PC-9 (cell line): ENCODE measurements at regions of chr6 and their contacts with region 1.

Region 1: DNA sequence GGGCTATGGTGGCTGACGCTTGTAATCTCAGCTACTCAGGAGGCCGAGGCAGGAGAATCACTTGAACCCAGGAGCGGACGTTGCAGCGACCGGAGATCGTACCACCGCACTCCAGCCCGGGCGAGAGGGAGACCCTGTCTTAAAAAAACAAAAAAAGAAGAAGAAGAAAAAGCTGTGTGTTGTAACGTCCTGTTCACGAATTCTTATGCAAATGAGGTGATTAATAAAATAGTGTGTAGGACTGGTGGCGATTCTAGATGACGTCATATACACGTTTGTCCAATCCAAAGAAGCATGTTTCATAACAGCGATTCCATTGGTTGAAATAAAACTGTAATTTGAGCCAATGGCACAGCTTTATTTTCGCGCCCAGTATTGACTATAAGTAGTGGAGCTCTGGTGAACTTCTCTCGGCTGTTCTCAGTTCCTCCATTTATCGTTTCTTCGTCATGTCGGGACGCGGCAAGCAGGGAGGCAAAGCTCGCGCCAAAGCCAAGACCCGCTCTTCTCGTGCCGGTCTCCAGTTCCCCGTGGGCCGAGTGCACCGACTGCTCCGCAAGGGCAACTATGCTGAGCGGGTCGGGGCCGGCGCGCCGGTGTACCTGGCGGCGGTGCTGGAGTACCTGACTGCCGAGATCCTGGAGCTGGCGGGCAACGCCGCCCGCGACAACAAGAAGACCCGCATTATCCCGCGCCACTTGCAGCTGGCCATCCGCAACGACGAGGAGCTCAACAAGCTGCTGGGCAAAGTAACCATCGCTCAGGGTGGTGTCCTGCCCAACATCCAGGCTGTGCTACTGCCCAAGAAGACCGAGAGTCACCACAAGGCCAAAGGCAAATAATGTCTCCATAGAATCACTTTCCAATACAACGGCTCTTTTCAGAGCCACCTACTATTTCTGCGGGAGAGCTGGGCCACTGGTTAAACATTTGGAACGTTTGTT is 47.0 kb downstream of the OR2B2 start:
- DNase-seq: peak; percentile 67 to 80
- H3K4me3 ChIP-seq: peak overlapping the region; percentile 55
- H3K27ac ChIP-seq: 0 out of 2 replicates have a peak overlapping the region, but pooled peaks have one; percentile 34
- H3K4me1 ChIP-seq: no peaks in the 10 kb centered on the region
- H3K27me3 ChIP-seq: no peaks in the 10 kb centered on the region
- CTCF ChIP-seq: no peak

Region 2: GRCh38 chr6:27838058-27838944 is 26.9 kb before region 1 on chr6:
- CTCF ChIA-PET with region 1: interaction called, 4 read pairs
- POLR2A ChIA-PET with region 1: interaction called, 22 read pairs
- intact Hi-C with region 1: loop called (anchors 2 kb)
- DNase-seq: peak; percentile 71 to 85
- H3K4me3 ChIP-seq: peak overlapping the region; percentile 58
- H3K27ac ChIP-seq: peak overlapping the region; percentile 87
- H3K4me1 ChIP-seq: no peaks in the 10 kb centered on the region
- H3K27me3 ChIP-seq: no peaks in the 10 kb centered on the region
- CTCF ChIP-seq: no peak

Region 3: GRCh38 chr6:27882624-27883023 is 17.4 kb after region 1 on chr6:
- CTCF ChIA-PET with region 1: no interaction called
- POLR2A ChIA-PET with region 1: interaction called, 14 read pairs
- intact Hi-C with region 1: no loop called
- DNase-seq: no peak
- H3K4me3 ChIP-seq: no peak overlapping the region
- H3K27ac ChIP-seq: no peak overlapping the region
- H3K4me1 ChIP-seq: no peaks in the 10 kb centered on the region
- H3K27me3 ChIP-seq: no peaks in the 10 kb centered on the region
- CTCF ChIP-seq: no peak

Region 4: DNA sequence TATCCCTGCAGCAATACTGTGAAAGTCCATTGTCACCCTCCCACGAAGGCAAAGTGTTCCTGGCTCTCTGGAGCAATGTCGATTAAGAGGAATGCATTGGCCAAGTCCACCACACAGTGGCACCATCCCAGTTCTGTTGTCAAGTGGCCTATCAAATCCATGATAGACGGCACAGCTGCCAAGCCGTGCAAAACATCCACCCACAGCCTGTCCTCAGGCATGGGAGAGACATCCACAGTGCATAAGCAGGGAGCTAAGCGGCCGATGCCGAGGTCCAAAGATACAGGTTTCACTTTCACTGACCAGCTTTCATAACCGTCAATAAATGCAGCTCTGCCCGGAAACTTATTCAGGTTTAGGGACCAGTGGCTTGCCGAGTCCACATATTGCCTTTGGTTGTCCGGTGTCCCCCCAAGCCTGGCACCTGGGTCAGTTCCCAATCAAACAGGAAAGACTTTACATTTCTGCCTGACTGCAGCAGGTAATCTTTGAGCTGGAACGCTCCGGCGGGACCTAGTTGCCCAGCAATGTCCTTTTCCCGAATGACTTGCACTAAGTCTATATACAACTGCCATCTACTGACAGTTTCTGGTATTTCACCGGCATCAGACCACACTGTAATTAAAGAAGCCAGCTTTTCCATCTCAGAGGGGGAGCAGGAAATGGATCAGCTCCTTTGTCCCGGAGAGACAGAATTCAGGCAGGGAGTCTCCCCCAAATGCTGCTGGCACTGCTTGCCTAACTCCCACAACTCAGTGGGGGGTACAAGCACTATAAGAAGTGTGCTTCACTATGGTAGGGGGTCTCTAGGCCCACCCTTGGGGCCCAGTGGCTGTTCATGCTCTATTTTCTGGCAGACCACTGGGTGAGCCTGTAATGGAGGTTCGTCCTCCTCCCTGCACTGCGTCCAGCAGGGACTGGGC is 490.8 kb after region 1 on chr6:
- CTCF ChIA-PET with region 1: no interaction called
- POLR2A ChIA-PET with region 1: interaction called, 15 read pairs
- intact Hi-C with region 1: no loop called
- DNase-seq: peak; percentile 75 to 80
- H3K4me3 ChIP-seq: peak overlapping the region; percentile 70
- H3K27ac ChIP-seq: peak overlapping the region; percentile 55
- H3K4me1 ChIP-seq: peaks cover 28% of the 10 kb centered on the region
- H3K27me3 ChIP-seq: no peaks in the 10 kb centered on the region
- CTCF ChIP-seq: peak; percentile 86

Region 5: DNA sequence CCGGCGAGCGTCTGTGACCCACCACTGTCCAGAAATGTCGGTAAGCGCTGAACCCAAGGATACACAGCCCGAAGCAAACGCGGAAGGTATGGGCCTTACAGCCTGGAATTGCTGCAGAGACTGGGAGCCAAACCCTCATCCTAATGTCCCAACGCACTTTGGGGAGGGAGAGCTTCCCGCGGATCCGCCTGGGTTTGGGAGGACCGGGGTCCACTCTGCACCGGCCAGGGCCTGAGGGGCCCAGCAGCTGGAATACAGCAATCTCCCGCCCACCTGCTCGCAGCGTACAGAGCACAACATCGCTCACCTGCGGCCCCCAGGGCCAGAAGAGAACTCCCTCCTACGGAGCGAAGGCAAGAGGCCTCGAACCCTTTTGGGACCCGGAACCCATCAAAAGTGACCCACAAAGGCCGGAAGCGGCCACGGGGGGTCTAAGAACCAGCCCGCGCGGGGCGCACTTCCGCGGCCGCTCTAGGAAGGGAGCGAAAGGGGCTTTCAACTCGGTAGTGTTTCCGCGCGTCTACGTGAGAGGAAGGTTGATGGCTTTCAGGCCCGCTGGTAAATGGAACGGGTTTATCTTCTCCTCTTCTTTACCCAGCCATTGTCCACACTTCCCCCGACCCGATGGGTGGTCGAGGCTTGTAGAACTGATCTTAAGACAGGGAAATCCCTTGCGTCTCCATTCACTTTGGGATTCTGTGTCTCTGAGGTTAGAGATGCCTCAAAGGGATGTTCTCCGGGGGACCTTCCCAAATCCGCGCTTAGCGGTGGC is 534.4 kb after region 1 on chr6 and contains the start of gene ZSCAN12:
- CTCF ChIA-PET with region 1: no interaction called
- POLR2A ChIA-PET with region 1: interaction called, 26 read pairs
- intact Hi-C with region 1: no loop called
- DNase-seq: peak; percentile 75 to 84
- H3K4me3 ChIP-seq: peak within 1 kb of the TSS; percentile 74
- H3K27ac ChIP-seq: peak within 1 kb of the TSS; percentile 43
- H3K4me1 ChIP-seq: peaks cover 30% of the 10 kb centered on the region
- H3K27me3 ChIP-seq: no peaks in the 10 kb centered on the region
- CTCF ChIP-seq: peak; percentile 43
- total RNA-seq, gene ZSCAN12: 10.9 and 11.2 TPM in 2 replicates